ENCODE measurements at regions of chr5 and their contacts with region 1.

Region 1: DNA sequence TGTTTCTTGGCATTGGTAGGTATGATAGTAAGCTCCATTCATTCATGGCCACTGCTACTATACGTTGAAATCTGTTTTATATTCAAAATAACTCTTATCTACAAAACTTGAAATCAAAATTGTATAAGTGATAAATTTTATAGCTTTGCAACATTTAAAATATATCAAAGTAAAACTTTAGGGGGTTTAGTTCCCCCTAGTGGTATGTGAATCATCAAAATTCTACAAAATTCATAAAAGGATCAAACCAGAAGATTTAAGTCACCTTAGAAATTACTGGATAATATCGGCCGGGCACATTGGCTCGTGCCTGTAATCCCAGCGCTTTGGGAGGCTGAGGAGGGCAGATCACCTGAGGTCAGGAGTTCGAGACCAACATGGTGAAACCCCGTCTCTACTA is 243.0 kb upstream of the CDH18 start:
- DNase-seq: no peak
- H3K4me3 ChIP-seq: no peak overlapping the region
- H3K27ac ChIP-seq: no peak overlapping the region
- H3K27me3 ChIP-seq: no peaks in the 10 kb centered on the region
- CTCF ChIP-seq: 0 out of 2 replicates have a peak, but pooled peaks have one; percentile 18

Region 2: DNA sequence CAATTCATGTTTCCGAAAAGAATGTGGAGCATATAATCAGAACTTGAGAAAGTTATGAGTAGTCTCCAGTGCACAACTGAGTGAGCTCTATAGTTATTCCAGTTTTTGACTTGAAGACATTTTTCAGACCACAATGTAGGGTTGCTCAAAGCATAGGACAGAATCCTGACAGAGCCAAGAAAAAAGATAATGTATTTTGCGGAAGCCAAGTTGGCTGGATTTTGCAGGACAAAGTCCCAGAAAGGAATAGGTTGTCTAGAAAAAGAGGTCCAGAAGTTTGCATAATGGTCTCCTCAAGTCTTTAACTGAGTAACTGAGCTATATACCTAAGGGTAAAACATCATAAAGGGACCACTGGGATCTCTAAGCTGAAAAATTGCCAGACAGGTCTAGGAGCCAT is 1568.8 kb before region 1 on chr5:
- CTCF ChIA-PET with region 1: interaction called, 13 read pairs
- POLR2A ChIA-PET with region 1: no interaction called
- DNase-seq: no peak
- H3K4me3 ChIP-seq: no peak overlapping the region
- H3K27ac ChIP-seq: no peak overlapping the region
- H3K27me3 ChIP-seq: no peaks in the 10 kb centered on the region
- CTCF ChIP-seq: no peak

Region 3: DNA sequence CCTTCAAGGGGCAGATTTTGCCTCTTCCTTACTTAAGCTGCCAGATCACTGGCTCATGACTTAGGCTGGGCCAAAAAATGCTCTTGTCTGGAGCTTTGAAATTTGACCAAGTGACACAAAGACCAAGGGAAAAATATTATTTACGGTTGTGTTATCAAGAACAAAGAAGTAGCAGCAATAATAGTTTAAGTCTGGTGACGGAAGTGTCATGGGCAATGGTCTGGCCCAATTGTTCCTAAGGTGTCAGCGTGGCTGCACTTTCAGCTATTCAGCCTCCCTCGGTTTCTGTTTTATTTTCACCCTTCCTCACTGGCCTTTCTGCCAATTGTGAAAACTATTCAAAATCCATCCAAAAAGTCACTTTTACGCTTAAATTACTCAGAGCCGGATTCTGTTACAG is 428.4 kb before region 1 on chr5:
- CTCF ChIA-PET with region 1: no interaction called
- POLR2A ChIA-PET with region 1: no interaction called
- DNase-seq: no peak
- H3K4me3 ChIP-seq: no peak overlapping the region
- H3K27ac ChIP-seq: no peak overlapping the region
- H3K27me3 ChIP-seq: no peaks in the 10 kb centered on the region
- CTCF ChIP-seq: no peak

Measured in AG04450 (cell line).